ENCODE measurements at regions of chr1 and their contacts with region 1.

Region 1: GRCh38 chr1:36349241-36349671 is 25.8 kb upstream of the EVA1B start:
- DNase-seq: peak; percentile 88
- H3K4me3 ChIP-seq: no peak overlapping the region
- H3K27ac ChIP-seq: peak overlapping the region; percentile 46
- H3K4me1 ChIP-seq: peaks cover 19% of the 10 kb centered on the region
- CTCF ChIP-seq: no peak

Region 2: DNA sequence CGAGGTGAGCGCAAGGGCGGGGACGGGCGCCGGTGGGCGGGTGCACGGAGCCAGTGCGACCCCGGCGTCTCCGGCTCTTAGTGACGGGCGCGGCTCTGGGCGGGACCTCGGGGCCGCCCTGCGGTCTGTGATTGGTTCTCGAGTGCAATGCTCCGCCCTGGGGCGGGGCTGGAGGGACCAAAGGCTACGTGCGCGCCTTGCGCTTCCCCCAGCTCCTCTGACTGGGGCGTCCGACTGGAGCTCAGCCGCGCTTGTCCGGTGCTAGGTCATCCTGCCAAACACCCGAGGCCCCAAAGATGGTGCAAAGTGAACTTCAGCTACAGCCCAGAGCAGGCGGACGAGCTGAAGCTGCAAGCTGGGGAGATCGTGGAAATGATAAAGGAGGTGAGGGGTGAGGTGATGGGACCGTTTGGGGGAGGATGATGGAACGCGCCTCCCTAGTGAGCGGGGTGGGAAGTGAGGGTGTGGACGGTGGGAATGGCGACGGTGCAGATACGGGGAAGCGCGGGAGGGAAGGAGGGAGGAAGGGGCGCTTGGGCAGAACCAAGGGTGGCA is 42.3 kb before region 1 on chr1:
- CTCF ChIA-PET with region 1: no interaction called
- POLR2A ChIA-PET with region 1: no interaction called
- intact Hi-C with region 1: loop called (anchors 2 kb)
- DNase-seq: peak; percentile 97
- H3K4me3 ChIP-seq: peak overlapping the region; percentile 65
- H3K27ac ChIP-seq: peak overlapping the region; percentile 29
- H3K4me1 ChIP-seq: peaks cover 25% of the 10 kb centered on the region
- CTCF ChIP-seq: no peak

Region 3: DNA sequence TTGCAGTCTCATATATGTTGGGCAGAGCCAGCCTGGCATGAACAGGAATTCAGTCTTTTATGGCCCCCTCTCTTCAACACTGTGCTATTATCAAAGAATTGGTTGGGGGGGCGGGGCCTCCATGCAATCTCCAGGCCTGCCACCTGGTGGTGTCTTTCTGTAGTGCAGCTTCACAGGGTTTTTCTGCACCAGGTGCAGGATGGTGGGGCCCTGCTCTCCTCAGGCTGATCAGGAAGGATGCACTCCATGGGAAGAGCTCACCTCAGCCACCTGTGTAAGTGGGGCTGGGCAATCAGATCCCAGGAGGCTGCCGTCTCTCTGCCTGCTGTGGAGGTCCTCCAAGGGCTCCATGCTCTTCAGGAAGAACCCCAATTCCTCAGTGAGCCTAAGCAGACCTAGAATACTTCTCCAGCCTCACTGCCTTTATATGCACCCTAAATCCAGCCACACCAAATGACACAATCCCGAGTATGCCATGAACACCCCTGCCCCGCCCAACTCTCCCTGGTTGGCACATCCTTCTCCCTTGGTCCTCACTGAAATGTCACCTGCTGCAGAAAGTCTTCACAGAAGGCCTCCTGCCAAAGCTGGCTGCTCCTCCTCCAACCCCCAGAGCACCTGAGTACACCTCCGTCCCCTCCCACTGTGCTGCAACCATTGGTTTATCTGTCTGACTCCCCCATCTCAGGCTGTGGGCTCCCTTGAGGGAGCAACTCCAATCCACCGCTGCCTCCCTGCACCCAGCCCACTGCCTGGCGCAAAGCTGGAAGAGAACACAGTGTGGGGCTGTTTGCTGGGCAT is 20.0 kb after region 1 on chr1:
- CTCF ChIA-PET with region 1: interaction called, 7 read pairs
- POLR2A ChIA-PET with region 1: interaction called, 3 read pairs
- intact Hi-C with region 1: loop called (anchors 1 kb)
- DNase-seq: peak; percentile 83
- H3K4me3 ChIP-seq: no peak overlapping the region
- H3K27ac ChIP-seq: peak overlapping the region; percentile 48
- H3K4me1 ChIP-seq: peaks cover 76% of the 10 kb centered on the region
- CTCF ChIP-seq: peak; percentile 96

Region 4: GRCh38 chr1:36567601-36568341 is 218.5 kb after region 1 on chr1:
- CTCF ChIA-PET with region 1: no interaction called
- POLR2A ChIA-PET with region 1: no interaction called
- intact Hi-C with region 1: no loop called
- DNase-seq: no peak
- H3K4me3 ChIP-seq: no peak overlapping the region
- H3K27ac ChIP-seq: no peak overlapping the region
- H3K4me1 ChIP-seq: no peaks in the 10 kb centered on the region
- CTCF ChIP-seq: no peak

Region 5: DNA sequence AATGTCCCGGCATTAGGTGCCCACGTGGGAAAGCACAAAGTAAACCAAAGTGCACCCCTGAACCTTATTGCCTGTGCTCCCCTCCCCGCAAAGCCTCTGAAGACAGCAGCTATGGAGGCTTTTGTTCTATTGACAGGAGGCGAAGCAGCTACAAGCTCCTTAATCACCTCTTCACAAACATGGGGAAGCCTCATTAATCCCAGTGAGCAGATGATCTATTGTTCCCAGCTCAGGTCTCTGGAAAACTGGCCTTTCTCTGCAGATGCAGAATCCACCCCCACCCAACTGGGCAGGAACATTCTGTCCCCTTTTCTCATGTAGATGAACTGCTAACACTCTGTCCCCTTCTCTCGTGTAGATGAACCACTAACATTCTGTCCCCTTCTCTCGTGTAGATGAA is 323.9 kb after region 1 on chr1:
- CTCF ChIA-PET with region 1: no interaction called
- POLR2A ChIA-PET with region 1: no interaction called
- intact Hi-C with region 1: no loop called
- DNase-seq: no peak
- H3K4me3 ChIP-seq: no peak overlapping the region
- H3K27ac ChIP-seq: no peak overlapping the region
- H3K4me1 ChIP-seq: no peaks in the 10 kb centered on the region
- CTCF ChIP-seq: no peak

Measured in OCI-LY7 (cell line).